ENCODE measurements at regions of chr19 and their contacts with region 1.

Region 1: DNA sequence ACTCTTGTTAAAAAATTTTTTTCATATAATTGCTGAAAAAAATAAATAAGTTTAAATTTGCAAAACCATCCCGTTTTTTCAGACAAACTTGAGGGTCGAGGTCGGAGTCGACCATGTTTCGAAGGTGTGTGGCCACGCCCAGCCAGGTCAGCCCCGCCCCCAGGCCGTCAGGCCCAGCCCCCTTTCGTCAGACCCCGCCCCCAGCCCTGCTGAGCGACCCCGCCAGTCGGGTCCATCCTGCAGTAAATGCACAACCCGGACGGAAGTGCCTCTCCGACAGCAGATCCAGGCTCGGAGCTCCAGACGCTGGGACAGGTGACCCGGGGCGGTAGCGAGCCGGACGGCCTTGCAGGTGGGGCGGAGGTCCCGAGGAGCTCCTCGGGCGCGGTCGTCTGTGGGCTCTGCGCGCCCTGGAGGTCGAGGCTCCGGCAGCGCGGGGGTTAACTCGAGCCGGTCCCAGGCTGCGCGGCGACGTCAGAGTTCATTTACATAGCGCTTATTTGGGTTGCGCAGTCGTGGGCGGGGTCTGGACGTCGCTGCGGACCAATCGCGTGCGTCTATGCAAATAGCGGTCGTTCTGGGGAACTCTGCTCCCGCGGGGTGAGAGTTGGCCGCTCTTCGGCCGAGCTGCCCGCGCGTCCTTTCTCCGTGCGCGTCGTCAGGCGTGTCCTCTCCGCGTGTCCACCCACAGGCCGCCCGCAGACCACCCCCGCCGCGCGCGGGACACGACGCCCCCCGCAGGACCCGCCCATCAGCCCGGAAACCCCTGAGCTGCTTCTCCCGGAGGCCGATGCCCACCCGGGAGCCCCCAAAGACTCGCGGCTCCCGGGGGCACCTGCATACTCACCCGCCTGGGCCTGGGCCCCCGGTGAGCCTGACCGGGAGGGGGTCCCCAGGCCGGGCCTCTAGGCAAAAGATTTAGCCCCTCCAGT is at the start of gene OCEL1:
- DNase-seq: peak; percentile 97 to 98
- H3K4me3 ChIP-seq: peak within 1 kb of the TSS; percentile 74
- H3K4me3 Mint-ChIP-seq: peak within 1 kb of the TSS; percentile 77
- H3K27ac Mint-ChIP-seq: peak within 1 kb of the TSS; percentile 87
- H3K4me1 ChIP-seq: no peaks in the 10 kb centered on the region
- H3K4me1 Mint-ChIP-seq: no peaks in the 10 kb centered on the region
- H3K27me3 ChIP-seq: no peaks in the 10 kb centered on the region
- H3K27me3 Mint-ChIP-seq: no peaks in the 10 kb centered on the region
- CTCF ChIP-seq: no peak
- total RNA-seq, gene OCEL1: 14.9 and 20.3 TPM in 2 replicates

Region 2: DNA sequence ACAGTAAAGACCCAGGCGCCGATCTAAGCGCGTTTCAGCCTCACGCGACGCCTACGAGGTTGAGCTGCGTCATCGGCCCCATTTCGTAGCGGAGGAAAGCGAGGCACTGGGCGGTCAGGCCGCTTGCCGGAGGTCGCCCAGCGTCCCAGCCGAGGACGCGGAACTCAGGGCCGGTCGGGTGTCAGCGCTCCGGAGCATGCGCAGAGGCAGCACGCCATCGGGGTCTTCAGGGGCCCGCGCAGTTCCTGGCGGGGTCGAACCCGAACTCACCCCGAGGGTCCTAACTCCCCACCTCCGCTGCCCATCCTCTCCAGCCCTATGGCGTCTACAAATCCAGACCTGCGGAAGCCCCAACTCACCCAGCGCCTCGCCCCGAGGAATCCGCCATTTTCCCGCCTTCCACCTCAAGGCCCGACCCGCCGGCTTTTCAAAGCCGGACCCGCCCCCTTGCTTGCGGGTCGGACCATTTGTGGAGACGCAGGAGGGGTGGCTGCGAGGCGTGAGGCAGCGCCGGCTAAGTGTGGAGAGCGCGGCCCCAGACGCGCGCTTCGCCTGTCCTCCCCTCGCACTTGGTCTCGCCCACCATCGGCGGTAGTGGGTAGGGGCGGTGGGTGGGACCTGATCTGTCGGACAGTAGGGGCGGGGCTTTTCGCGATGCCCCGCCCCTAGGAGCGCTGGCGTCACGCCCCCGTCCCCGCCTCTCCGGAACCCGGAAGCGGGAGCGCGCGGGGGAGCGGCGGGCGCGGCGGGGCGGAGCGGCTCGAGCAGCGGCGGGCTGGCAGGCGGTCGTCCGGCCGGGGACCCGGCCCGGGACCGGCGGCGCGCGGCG is 151.0 kb before region 1 on chr19 and contains the starts of genes HAUS8 and MYO9B:
- CTCF ChIA-PET with region 1: no interaction called
- POLR2A ChIA-PET with region 1: no interaction called
- intact Hi-C with region 1: loop called (anchors 1 kb)
- DNase-seq: peak; percentile 99
- H3K4me3 ChIP-seq: peak within 1 kb of the TSS; percentile 88
- H3K4me3 Mint-ChIP-seq: peak within 1 kb of the TSS; percentile 88
- H3K27ac Mint-ChIP-seq: peak within 1 kb of the TSS; percentile 92
- H3K4me1 ChIP-seq: no peaks in the 10 kb centered on the region
- H3K4me1 Mint-ChIP-seq: peaks cover 4% of the 10 kb centered on the region
- H3K27me3 ChIP-seq: no peaks in the 10 kb centered on the region
- H3K27me3 Mint-ChIP-seq: no peaks in the 10 kb centered on the region
- CTCF ChIP-seq: no peak
- total RNA-seq, gene HAUS8: 24.4 and 30.6 TPM in 2 replicates
- total RNA-seq, gene MYO9B: 47.6 and 52.8 TPM in 2 replicates

Region 3: GRCh38 chr19:17215125-17215971 is 10.9 kb before region 1 on chr19 and contains the start of gene USE1:
- CTCF ChIA-PET with region 1: interaction called, 10 read pairs
- POLR2A ChIA-PET with region 1: interaction called, 35 read pairs
- intact Hi-C with region 1: no loop called
- DNase-seq: peak; percentile 87 to 89
- H3K4me3 ChIP-seq: peak within 1 kb of the TSS; percentile 86
- H3K4me3 Mint-ChIP-seq: peak within 1 kb of the TSS; percentile 95
- H3K27ac Mint-ChIP-seq: peak within 1 kb of the TSS; percentile 98
- H3K4me1 ChIP-seq: peaks cover 11% of the 10 kb centered on the region; the same call in 1 of the 2 replicates
- H3K4me1 Mint-ChIP-seq: no peaks in the 10 kb centered on the region
- H3K27me3 ChIP-seq: no peaks in the 10 kb centered on the region
- H3K27me3 Mint-ChIP-seq: no peaks in the 10 kb centered on the region
- CTCF ChIP-seq: no peak
- total RNA-seq, gene USE1: 20.2 and 20.7 TPM in 2 replicates

Region 4: GRCh38 chr19:17245244-17245984 is 19.1 kb after region 1 on chr19 and contains the start of gene NR2F6:
- CTCF ChIA-PET with region 1: interaction called, 3 read pairs
- POLR2A ChIA-PET with region 1: interaction called, 8 read pairs
- intact Hi-C with region 1: loop called (anchors 1 kb)
- DNase-seq: peak in 1 of 2 experiments; percentile 61
- H3K4me3 ChIP-seq: peak within 1 kb of the TSS; percentile 78
- H3K4me3 Mint-ChIP-seq: peak within 1 kb of the TSS; percentile 94
- H3K27ac Mint-ChIP-seq: peak within 1 kb of the TSS; percentile 92
- H3K4me1 ChIP-seq: peaks cover 63% of the 10 kb centered on the region
- H3K4me1 Mint-ChIP-seq: peaks cover 30% of the 10 kb centered on the region
- H3K27me3 ChIP-seq: no peaks in the 10 kb centered on the region
- H3K27me3 Mint-ChIP-seq: no peaks in the 10 kb centered on the region
- CTCF ChIP-seq: no peak
- total RNA-seq, gene NR2F6: 94.4 and 96.5 TPM in 2 replicates

Region 5: GRCh38 chr19:17266975-17267788 is 40.9 kb after region 1 on chr19 and contains the start of gene BABAM1:
- CTCF ChIA-PET with region 1: no interaction called
- POLR2A ChIA-PET with region 1: interaction called, 12 read pairs
- intact Hi-C with region 1: loop called (anchors 5 kb)
- DNase-seq: peak; percentile 97 to 98
- H3K4me3 ChIP-seq: peak within 1 kb of the TSS; percentile 93
- H3K4me3 Mint-ChIP-seq: peak within 1 kb of the TSS; percentile 74
- H3K27ac Mint-ChIP-seq: peak within 1 kb of the TSS; percentile 80
- H3K4me1 ChIP-seq: no peaks in the 10 kb centered on the region; the same call in 1 of the 2 replicates
- H3K4me1 Mint-ChIP-seq: peaks cover 7% of the 10 kb centered on the region
- H3K27me3 ChIP-seq: no peaks in the 10 kb centered on the region
- H3K27me3 Mint-ChIP-seq: no peaks in the 10 kb centered on the region
- CTCF ChIP-seq: no peak
- total RNA-seq, gene BABAM1: 91.7 and 98.8 TPM in 2 replicates

Region 6: GRCh38 chr19:17282488-17283255 is 56.4 kb after region 1 on chr19:
- CTCF ChIA-PET with region 1: interaction called, 5 read pairs
- POLR2A ChIA-PET with region 1: no interaction called
- intact Hi-C with region 1: loop called (anchors 1 kb)
- DNase-seq: peak; percentile 90 to 93
- H3K4me3 ChIP-seq: peak overlapping the region; percentile 62
- H3K4me3 Mint-ChIP-seq: peak overlapping the region; percentile 85
- H3K27ac Mint-ChIP-seq: peak overlapping the region; percentile 79
- H3K4me1 ChIP-seq: peaks cover 11% of the 10 kb centered on the region; the same call in 1 of the 2 replicates
- H3K4me1 Mint-ChIP-seq: peaks cover 5% of the 10 kb centered on the region
- H3K27me3 ChIP-seq: no peaks in the 10 kb centered on the region
- H3K27me3 Mint-ChIP-seq: no peaks in the 10 kb centered on the region
- CTCF ChIP-seq: peak; percentile 88 to 93

Region 7: DNA sequence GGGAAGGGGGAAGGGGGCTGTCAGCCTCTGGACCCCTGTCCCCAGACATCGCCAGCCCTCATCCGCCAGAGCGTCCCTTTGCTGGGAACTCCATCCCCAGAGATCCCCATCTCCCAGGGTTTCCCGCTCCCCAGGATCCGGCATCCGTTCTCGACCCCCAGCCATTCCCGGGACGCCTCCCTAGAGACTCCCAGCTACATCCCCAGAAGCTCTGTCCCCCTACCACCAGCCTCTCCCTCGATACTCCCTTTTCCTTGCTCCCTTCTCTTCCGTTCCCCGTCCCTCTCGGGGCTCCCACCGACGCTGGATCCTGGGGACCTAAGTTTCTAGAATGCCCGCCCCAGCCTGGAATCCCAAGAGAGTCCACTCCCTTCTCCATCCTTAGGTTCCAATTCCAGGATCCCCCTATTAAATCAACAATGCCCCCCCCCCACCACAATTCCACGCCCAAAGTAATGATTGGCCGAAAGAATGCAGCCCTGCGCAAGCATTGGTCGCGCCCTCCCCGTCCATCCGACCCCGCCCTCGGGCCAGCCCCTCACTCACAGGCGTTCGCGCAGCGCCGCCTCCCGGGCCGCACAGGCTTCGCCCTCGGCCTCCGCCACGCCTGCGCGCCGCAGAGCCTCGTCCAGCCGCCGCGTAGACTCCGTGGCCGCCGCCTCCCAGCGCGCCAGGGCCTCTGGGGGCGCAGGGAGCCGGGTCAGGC is 164.6 kb after region 1 on chr19:
- CTCF ChIA-PET with region 1: interaction called, 10 read pairs
- POLR2A ChIA-PET with region 1: no interaction called
- intact Hi-C with region 1: no loop called
- DNase-seq: peak; percentile 93 to 95
- H3K4me3 ChIP-seq: peak overlapping the region; percentile 48
- H3K4me3 Mint-ChIP-seq: peak overlapping the region; percentile 78
- H3K27ac Mint-ChIP-seq: peak overlapping the region; percentile 32
- H3K4me1 ChIP-seq: 0 out of 2 replicates have a peak, but pooled peaks cover 5% of the 10 kb centered on the region
- H3K4me1 Mint-ChIP-seq: peaks cover 6% of the 10 kb centered on the region
- H3K27me3 ChIP-seq: no peaks in the 10 kb centered on the region
- H3K27me3 Mint-ChIP-seq: peaks cover 3% of the 10 kb centered on the region
- CTCF ChIP-seq: peak; percentile 62 to 68